CD8-positive, alpha-beta T cell (primary cell): ENCODE measurements at regions of chr2 and their contacts with region 1.

Region 1: GRCh38 chr2:151828143-151828889 is at the start of gene ARL5A:
- DNase-seq: peak; percentile 91 to 98 (median 94)
- ATAC-seq: peak; percentile 95
- H3K4me3 ChIP-seq: peak within 1 kb of the TSS; percentile 66 to 97
- H3K4me3 Mint-ChIP-seq: peak within 1 kb of the TSS; percentile 85
- H3K27ac ChIP-seq: peak within 1 kb of the TSS; percentile 22 to 80
- H3K27ac Mint-ChIP-seq: peak within 1 kb of the TSS; percentile 93
- H3K4me1 ChIP-seq: peaks cover 34% of the 10 kb centered on the region
- H3K4me1 Mint-ChIP-seq: peaks cover 53% of the 10 kb centered on the region
- H3K27me3 ChIP-seq: no peaks in the 10 kb centered on the region
- H3K27me3 Mint-ChIP-seq: no peaks in the 10 kb centered on the region
- CTCF ChIP-seq: no peak
- total RNA-seq, gene ARL5A: 18.8 to 24.1 TPM

Region 2: GRCh38 chr2:151261231-151261976 is 566.9 kb before region 1 on chr2 and contains the start of gene RBM43:
- CTCF ChIA-PET with region 1: no interaction called
- POLR2A ChIA-PET with region 1: interaction called, 6 read pairs
- intact Hi-C with region 1: loop called in 1 of 2 experiments (anchors 2 kb)
- DNase-seq: peak; percentile 60 to 94 (median 82)
- ATAC-seq: peak; percentile 87
- H3K4me3 ChIP-seq: peak within 1 kb of the TSS; percentile 68
- H3K4me3 Mint-ChIP-seq: peak within 1 kb of the TSS; percentile 90
- H3K27ac ChIP-seq: peak within 1 kb of the TSS; percentile 91 to 96
- H3K27ac Mint-ChIP-seq: peak within 1 kb of the TSS; percentile 98
- H3K4me1 ChIP-seq: peaks cover 5% of the 10 kb centered on the region
- H3K4me1 Mint-ChIP-seq: peaks cover 38% of the 10 kb centered on the region
- H3K27me3 ChIP-seq: no peaks in the 10 kb centered on the region
- H3K27me3 Mint-ChIP-seq: no peaks in the 10 kb centered on the region
- CTCF ChIP-seq: no peak
- total RNA-seq, gene RBM43: 12.1 to 12.4 TPM

Region 3: GRCh38 chr2:151409601-151410484 is 418.5 kb before region 1 on chr2 and contains the start of gene RIF1:
- CTCF ChIA-PET with region 1: no interaction called
- POLR2A ChIA-PET with region 1: no interaction called
- intact Hi-C with region 1: loop called (anchors 2 to 5 kb)
- DNase-seq: peak; percentile 46 to 84 (median 70)
- ATAC-seq: peak; percentile 87
- H3K4me3 ChIP-seq: peak within 1 kb of the TSS; percentile 76 to 80
- H3K4me3 Mint-ChIP-seq: peak within 1 kb of the TSS; percentile 98
- H3K27ac ChIP-seq: peak within 1 kb of the TSS; percentile 78 to 79
- H3K27ac Mint-ChIP-seq: peak within 1 kb of the TSS; percentile 98
- H3K4me1 ChIP-seq: peaks cover 12% of the 10 kb centered on the region
- H3K4me1 Mint-ChIP-seq: peaks cover 34% of the 10 kb centered on the region
- H3K27me3 ChIP-seq: no peaks in the 10 kb centered on the region
- H3K27me3 Mint-ChIP-seq: no peaks in the 10 kb centered on the region
- CTCF ChIP-seq: peak; percentile 56
- total RNA-seq, gene RIF1: 51.6 to 53.1 TPM

Region 4: GRCh38 chr2:151638191-151638933 is 190.0 kb before region 1 on chr2:
- CTCF ChIA-PET with region 1: interaction called, 4 read pairs
- POLR2A ChIA-PET with region 1: interaction called, 4 read pairs
- intact Hi-C with region 1: loop called (anchors 2 to 5 kb)
- DNase-seq: peak in 7 of 9 experiments; percentile 21 to 68 (median 31)
- ATAC-seq: peak; percentile 37
- H3K4me3 ChIP-seq: no peak overlapping the region
- H3K4me3 Mint-ChIP-seq: peak overlapping the region; percentile 72
- H3K27ac ChIP-seq: peak overlapping the region; percentile 42 to 79
- H3K27ac Mint-ChIP-seq: peak overlapping the region; percentile 93
- H3K4me1 ChIP-seq: peaks cover 43% of the 10 kb centered on the region
- H3K4me1 Mint-ChIP-seq: peaks cover 43% of the 10 kb centered on the region
- H3K27me3 ChIP-seq: no peaks in the 10 kb centered on the region
- H3K27me3 Mint-ChIP-seq: no peaks in the 10 kb centered on the region
- CTCF ChIP-seq: no peak

Region 5: DNA sequence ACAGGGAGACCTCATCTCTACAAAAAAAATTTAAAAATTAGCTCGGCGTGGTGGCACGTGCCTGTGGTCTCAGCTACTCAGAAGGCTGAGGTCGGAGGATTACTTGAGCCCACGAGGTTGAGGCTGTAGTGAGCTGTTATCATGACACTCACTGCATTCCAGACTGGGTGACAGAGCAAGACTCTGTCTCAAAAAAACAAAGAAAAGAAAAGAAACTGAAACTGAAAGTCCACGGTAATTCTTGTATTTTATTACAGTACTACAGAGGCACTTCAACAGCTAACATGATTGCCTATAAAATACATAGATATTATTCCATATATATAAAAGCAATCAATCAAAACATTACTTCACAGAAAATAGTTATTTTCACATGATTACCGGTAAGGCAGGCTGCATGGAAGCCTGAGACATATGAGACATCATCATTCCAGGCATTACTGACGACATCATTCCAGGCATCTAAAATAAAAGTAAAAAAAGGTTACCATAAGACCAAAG is 865.9 kb after region 1 on chr2:
- CTCF ChIA-PET with region 1: no interaction called
- POLR2A ChIA-PET with region 1: no interaction called
- intact Hi-C with region 1: loop called in 1 of 2 experiments (anchors 1 kb)
- DNase-seq: peak in 5 of 9 experiments; percentile 7 to 63 (median 24)
- ATAC-seq: peak; percentile 80
- H3K4me3 ChIP-seq: peak overlapping the region in 1 of 2 experiments; percentile 46
- H3K4me3 Mint-ChIP-seq: peak overlapping the region; percentile 80
- H3K27ac ChIP-seq: peak overlapping the region; percentile 4 to 75
- H3K27ac Mint-ChIP-seq: peak overlapping the region; percentile 89
- H3K4me1 ChIP-seq: peaks cover 9% of the 10 kb centered on the region
- H3K4me1 Mint-ChIP-seq: peaks cover 49% of the 10 kb centered on the region
- H3K27me3 ChIP-seq: no peaks in the 10 kb centered on the region
- H3K27me3 Mint-ChIP-seq: no peaks in the 10 kb centered on the region
- CTCF ChIP-seq: no peak